ENCODE measurements at regions of chr3 and their contacts with region 1.

Region 1: DNA sequence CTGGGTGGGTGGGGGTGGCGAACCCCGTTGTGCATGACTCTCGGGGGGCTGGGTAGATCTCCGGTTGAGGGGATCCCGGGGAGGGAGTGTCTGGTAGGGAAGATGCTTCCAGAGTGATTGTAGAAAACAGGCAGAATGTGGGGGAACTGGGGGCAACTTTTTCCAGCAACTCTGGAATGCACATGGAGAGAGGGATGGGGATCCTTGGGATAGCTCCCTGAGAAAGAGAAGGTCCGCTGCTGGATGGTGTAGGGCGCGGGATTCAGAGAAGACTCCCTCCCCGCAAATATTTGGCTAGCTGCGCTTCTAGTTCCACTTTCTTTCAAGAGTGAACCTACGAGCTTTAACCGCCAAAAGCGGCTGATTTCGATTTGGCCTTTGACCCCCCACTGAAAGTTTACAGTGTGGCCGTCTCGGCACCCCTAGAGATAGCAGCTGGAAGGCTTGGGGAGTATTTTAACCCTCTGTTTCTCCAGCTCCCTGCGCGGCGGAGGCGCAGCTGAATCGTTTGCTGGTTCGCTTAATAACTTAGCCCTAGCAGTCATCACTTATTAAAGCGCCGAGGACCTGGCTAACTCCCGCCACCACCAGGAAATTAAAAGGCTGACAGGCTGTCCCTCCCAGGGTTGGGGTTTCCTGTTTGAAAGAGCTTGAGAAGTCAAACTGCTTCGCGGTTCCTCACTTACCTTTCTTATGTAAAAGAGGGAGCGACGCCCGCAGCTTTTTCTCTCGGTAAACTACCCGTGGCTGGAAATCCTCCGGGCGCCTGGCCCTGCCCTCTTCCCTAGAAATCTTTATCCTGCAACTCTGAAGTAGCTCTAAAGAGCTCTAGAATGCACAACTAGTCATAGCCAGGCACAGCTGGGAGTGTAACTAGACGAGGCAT is 1.2 kb downstream of the PHLDB2 start:
- DNase-seq: peak; percentile 84
- ATAC-seq: peak; percentile 74

Region 2: GRCh38 chr3:111521891-111522290 is 338.3 kb before region 1 on chr3:
- intact Hi-C with region 1: no loop called
- DNase-seq: no peak
- ATAC-seq: no peak

Region 3: DNA sequence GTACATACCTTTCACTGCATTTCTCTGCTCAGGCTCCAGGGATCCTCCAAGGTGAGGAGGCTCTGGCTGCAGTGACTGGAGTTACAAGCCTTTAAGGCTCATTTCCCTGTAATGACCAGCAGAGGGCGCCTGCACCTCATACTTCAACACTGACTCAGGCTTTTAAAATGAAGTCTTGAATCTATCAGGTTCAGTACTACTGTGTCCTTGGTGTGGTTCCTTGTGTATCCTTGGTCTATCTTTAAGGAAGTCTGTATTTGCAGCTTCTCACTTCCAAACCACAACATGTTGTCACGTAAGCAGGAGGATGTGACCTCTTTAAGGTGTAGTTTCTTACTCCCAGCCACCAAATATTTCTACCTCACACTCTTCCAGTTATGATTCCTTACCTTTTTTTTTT is 142.6 kb before region 1 on chr3:
- intact Hi-C with region 1: loop called (anchors 1 kb)
- DNase-seq: peak; percentile 80
- ATAC-seq: peak; percentile 87

Region 4: GRCh38 chr3:111781561-111782446 is 78.4 kb before region 1 on chr3:
- intact Hi-C with region 1: loop called (anchors 5 kb)
- DNase-seq: no peak
- ATAC-seq: no peak

Region 5: GRCh38 chr3:111824351-111824750 is 35.9 kb before region 1 on chr3:
- intact Hi-C with region 1: loop called (anchors 5 kb)
- DNase-seq: no peak
- ATAC-seq: no peak

Region 6: GRCh38 chr3:111924283-111924682 is 64.1 kb after region 1 on chr3:
- intact Hi-C with region 1: loop called (anchors 2 kb)
- DNase-seq: peak; percentile 65
- ATAC-seq: peak; percentile 93

Measured in Right ventricle myocardium inferior (tissue), 1 donor.